PC-3 (cell line): ENCODE measurements at regions of chr1 and their contacts with region 1.

Region 1: GRCh38 chr1:185917646-185918045 is 183.5 kb downstream of the HMCN1 start:
- DNase-seq: peak; percentile 44
- ATAC-seq: no peak
- H3K4me3 ChIP-seq: no peak overlapping the region
- H3K27ac ChIP-seq: no peak overlapping the region
- H3K4me1 ChIP-seq: peaks cover 6% of the 10 kb centered on the region; the same call in 1 of the 2 replicates
- H3K27me3 ChIP-seq: no peaks in the 10 kb centered on the region
- CTCF ChIP-seq: no peak

Region 2: GRCh38 chr1:185973645-185974044 is 56.0 kb after region 1 on chr1:
- CTCF ChIA-PET with region 1: no interaction called
- POLR2A ChIA-PET with region 1: no interaction called
- intact Hi-C with region 1: loop called (anchors 2 kb)
- DNase-seq: peak; percentile 86
- ATAC-seq: peak; percentile 88
- H3K4me3 ChIP-seq: no peak overlapping the region
- H3K27ac ChIP-seq: no peak overlapping the region
- H3K4me1 ChIP-seq: peaks cover 36% of the 10 kb centered on the region
- H3K27me3 ChIP-seq: no peaks in the 10 kb centered on the region
- CTCF ChIP-seq: no peak

Region 3: GRCh38 chr1:186014370-186015030 is 96.9 kb after region 1 on chr1:
- CTCF ChIA-PET with region 1: no interaction called
- POLR2A ChIA-PET with region 1: no interaction called
- intact Hi-C with region 1: no loop called
- DNase-seq: no peak
- ATAC-seq: no peak
- H3K4me3 ChIP-seq: no peak overlapping the region
- H3K27ac ChIP-seq: no peak overlapping the region
- H3K4me1 ChIP-seq: peaks cover 7% of the 10 kb centered on the region; the same call in 1 of the 2 replicates
- H3K27me3 ChIP-seq: no peaks in the 10 kb centered on the region
- CTCF ChIP-seq: no peak

Region 4: DNA sequence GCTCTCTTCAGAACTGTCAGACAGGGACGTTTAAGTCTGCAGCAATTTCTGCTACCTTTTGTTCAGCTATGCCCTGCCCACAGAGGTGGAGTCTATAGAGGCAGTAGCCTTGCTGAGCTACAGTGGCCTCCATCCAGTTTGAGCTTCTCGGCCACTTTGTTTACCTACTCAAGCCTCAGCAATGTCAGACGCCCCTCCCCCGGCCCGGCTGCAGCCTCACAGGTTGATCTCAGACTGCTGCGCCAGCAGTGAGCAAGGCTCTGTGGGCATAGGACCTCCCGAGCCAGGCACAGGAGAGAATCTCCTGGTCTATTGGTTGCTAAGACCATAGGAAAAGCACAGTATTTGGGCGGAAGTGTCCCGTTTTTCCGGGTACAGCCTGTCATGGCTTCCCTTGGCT is 633.2 kb after region 1 on chr1:
- CTCF ChIA-PET with region 1: no interaction called
- POLR2A ChIA-PET with region 1: no interaction called
- intact Hi-C with region 1: no loop called
- DNase-seq: no peak
- ATAC-seq: no peak
- H3K4me3 ChIP-seq: no peak overlapping the region
- H3K27ac ChIP-seq: no peak overlapping the region
- H3K4me1 ChIP-seq: no peaks in the 10 kb centered on the region
- H3K27me3 ChIP-seq: no peaks in the 10 kb centered on the region
- CTCF ChIP-seq: no peak